ENCODE measurements at regions of chr9 and their contacts with region 1.

Region 1: DNA sequence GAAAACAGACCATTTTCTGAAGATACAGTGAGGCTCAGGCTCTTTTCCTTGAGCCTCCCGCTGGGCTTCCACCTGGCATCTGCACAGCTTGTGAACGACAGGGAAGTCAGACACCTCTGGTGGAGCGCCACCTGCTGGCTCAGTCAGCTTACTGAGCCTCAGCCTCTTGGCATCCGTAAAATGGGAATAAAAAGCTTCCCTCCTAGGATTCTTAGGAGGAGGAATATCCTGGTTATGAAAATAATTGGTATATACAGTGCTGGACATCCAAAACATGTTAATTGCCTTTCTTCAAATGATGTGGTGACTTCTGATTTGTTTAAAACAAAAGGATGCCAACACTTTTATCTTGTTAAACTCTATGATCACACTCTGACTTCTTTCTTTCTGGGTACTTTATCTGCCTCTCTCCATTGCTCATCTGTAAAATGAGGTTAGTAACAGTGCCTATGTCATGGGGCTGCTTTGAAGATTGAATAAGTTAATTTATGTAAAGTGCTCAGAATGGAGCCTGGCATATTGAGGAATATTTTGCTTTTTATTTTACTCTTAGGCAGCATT is 67.5 kb downstream of the MAMDC2 start:
- DNase-seq: peak; percentile 60
- H3K4me3 ChIP-seq: no peak overlapping the region
- H3K27ac ChIP-seq: no peak overlapping the region
- H3K27me3 ChIP-seq: no peaks in the 10 kb centered on the region
- CTCF ChIP-seq: peak; percentile 95

Region 2: GRCh38 chr9:69971643-69972449 is 139.3 kb before region 1 on chr9:
- in situ Hi-C with region 1: loop called (anchors 10 kb)
- DNase-seq: peak; percentile 58
- H3K4me3 ChIP-seq: no peak overlapping the region
- H3K27ac ChIP-seq: no peak overlapping the region
- H3K27me3 ChIP-seq: no peaks in the 10 kb centered on the region
- CTCF ChIP-seq: peak; percentile 98

Measured in brain microvascular endothelial cell (primary cell).